A673 (cell line): ENCODE measurements at regions of chr5 and their contacts with region 1.

Region 1: DNA sequence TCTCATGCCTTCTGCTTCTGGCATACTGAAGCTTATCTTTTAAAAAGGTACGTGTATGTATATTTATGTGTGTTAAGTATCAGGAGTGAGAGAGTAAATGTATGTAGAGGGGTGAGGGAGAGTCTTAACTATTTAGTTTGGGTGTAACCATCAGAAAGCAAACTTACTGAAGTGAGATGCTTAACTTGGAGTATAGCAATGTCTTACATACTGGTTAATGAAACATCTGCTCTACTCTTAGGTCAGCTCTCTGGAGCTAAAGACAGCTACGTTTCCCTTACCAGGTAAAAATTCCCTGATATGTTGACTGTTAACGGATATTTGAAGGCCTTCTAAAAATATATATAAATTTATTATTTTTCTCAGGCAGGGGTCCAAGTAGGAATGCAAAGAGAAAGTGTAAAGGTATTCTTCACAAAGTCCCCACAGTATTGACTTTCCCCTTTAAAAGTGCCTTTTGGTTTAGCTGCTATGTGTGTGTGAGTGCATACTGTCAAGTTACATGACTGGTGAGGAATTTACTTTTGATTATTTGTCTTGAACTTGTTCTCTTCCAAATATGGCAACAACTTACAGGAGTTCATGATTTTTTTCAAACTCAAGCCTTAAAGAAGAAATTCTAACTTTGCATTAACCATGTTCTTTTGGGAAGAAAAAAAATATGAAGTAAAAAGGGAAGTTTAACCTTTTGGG is 12.3 kb upstream of the C5orf24 start:
- DNase-seq: no peak
- H3K4me3 ChIP-seq: no peak overlapping the region
- H3K27ac ChIP-seq: no peak overlapping the region
- H3K4me1 ChIP-seq: no peaks in the 10 kb centered on the region
- H3K27me3 ChIP-seq: no peaks in the 10 kb centered on the region
- CTCF ChIP-seq: no peak

Region 2: GRCh38 chr5:133715622-133716021 is 1117.9 kb before region 1 on chr5:
- CTCF ChIA-PET with region 1: no interaction called
- POLR2A ChIA-PET with region 1: interaction called, 11 read pairs
- intact Hi-C with region 1: no loop called
- DNase-seq: no peak
- H3K4me3 ChIP-seq: no peak overlapping the region
- H3K27ac ChIP-seq: no peak overlapping the region
- H3K4me1 ChIP-seq: no peaks in the 10 kb centered on the region
- H3K27me3 ChIP-seq: no peaks in the 10 kb centered on the region
- CTCF ChIP-seq: no peak

Region 3: DNA sequence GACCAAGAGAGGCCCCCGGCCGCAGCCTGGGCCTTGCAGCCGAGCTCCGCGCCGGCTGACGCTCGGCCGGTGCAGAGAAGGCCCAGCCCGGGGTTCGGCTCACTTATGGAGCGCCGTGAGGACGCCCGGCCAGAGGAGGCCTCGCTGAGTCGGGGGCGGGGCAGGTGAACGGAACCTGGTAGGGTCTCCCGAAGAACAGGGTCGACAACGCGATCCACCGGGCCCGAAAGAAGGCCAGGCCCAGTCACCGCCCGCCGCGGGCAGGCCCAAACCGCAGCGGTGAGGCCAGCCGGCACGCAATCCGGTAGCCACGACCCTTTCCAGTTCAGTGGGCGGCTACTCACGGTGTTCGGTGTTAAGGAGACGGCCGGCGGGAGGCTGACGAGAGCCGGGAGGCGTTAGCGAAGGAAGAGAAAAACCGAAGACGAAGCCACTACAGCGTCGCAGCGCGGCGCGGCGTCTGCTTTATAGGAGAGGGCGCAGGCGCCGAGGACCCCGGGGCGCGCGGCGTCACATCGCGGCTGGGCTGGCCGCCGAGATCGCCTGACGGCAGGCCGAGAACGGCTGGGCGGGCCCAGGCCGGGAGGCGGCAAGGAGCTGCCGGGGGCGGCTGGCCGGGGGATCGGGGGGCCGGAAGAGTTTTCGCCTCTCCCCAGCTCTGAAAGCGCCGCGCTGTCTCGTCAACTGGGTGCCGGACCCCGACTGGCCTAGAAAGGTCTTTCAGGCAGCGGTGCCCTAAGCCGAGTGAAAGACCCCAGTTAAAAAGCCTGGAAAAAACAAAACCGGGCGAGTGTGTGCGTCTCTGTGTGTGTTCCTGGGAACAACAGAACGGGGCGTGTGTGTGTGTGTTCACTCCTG is 656.7 kb before region 1 on chr5 and contains the start of gene SKP1:
- CTCF ChIA-PET with region 1: no interaction called
- POLR2A ChIA-PET with region 1: interaction called, 14 read pairs
- intact Hi-C with region 1: no loop called
- DNase-seq: peak; percentile 87
- H3K4me3 ChIP-seq: peak within 1 kb of the TSS; percentile 88
- H3K27ac ChIP-seq: peak within 1 kb of the TSS; percentile 100
- H3K4me1 ChIP-seq: peaks cover 17% of the 10 kb centered on the region
- H3K27me3 ChIP-seq: no peaks in the 10 kb centered on the region
- CTCF ChIP-seq: no peak
- total RNA-seq, gene SKP1: 409 and 465 TPM in 2 replicates

Region 4: GRCh38 chr5:134451936-134452505 is 381.5 kb before region 1 on chr5:
- CTCF ChIA-PET with region 1: no interaction called
- POLR2A ChIA-PET with region 1: no interaction called
- intact Hi-C with region 1: no loop called
- DNase-seq: peak; percentile 50
- H3K4me3 ChIP-seq: no peak overlapping the region
- H3K27ac ChIP-seq: no peak overlapping the region
- H3K4me1 ChIP-seq: no peaks in the 10 kb centered on the region
- H3K27me3 ChIP-seq: no peaks in the 10 kb centered on the region
- CTCF ChIP-seq: no peak